Colonic mucosa (tissue), 4 donors: ENCODE measurements at regions of chr3 and their contacts with region 1.

Region 1: DNA sequence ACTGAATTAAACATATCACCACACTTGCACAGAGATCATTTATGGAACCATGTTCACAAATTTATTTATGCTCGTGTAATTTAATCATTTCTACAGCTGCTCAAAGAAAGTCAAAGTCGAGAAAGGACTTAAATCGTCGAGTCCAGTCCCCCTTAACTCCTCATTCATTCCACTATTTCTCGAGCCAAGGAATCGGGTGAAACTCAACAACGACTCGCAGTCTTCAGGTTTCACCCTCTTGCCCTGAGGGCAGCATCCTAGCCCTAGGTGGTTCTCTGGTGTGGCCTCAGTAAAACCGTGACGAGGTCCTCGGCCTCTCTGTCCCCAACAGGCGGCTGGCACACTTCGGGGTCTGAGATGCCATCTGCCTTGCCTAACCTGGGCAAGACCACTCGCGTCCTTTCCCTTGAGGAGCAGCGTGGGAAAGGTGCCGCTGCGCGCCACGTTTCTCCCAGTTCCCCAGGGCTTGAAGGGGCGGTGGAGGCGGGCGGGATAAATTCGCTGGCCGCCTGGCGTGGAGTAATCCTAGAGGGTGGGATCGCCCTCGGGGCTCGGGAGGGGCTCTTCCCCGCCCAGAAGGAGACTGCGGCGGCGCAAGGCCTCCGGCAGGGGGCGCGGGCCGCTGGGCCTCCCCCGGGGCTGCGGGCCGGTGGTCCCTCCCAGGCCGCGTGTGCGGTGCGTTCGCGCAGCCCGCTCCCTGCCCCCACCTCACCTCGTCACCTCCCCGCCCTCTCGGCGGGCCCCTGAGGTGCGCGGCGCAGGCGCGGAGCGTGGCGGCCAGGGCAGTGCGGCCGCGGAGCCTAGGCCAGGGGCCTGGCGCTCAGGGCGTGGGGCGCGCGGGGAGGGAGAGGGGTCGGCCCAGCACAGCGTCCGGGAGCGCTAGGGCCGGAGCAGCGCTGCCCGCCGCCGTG is at the start of gene ZNF639:
- DNase-seq: peak; percentile 78
- H3K4me3 ChIP-seq: peak within 1 kb of the TSS; percentile 85
- H3K27ac ChIP-seq: peak within 1 kb of the TSS; percentile 90
- H3K4me1 ChIP-seq: peaks cover 15% of the 10 kb centered on the region
- H3K27me3 ChIP-seq: no peaks in the 10 kb centered on the region
- CTCF ChIP-seq: peak; percentile 76
- total RNA-seq, gene ZNF639: 18.6 to 29.4 TPM

Region 2: GRCh38 chr3:179015551-179016020 is 307.0 kb before region 1 on chr3:
- intact Hi-C with region 1: loop called (anchors 2 kb)
- DNase-seq: peak; percentile 71
- H3K4me3 ChIP-seq: no peak overlapping the region
- H3K27ac ChIP-seq: no peak overlapping the region
- H3K4me1 ChIP-seq: no peaks in the 10 kb centered on the region
- H3K27me3 ChIP-seq: no peaks in the 10 kb centered on the region
- CTCF ChIP-seq: peak; percentile 78

Region 3: GRCh38 chr3:179147873-179148615 is 174.5 kb before region 1 on chr3 and contains the start of gene PIK3CA:
- intact Hi-C with region 1: loop called (anchors 5 kb)
- DNase-seq: peak; percentile 96
- H3K4me3 ChIP-seq: peak within 1 kb of the TSS; percentile 75
- H3K27ac ChIP-seq: peak within 1 kb of the TSS; percentile 95
- H3K4me1 ChIP-seq: no peaks in the 10 kb centered on the region
- H3K27me3 ChIP-seq: no peaks in the 10 kb centered on the region
- CTCF ChIP-seq: no peak
- total RNA-seq, gene PIK3CA: 11.3 to 18.0 TPM

Region 4: DNA sequence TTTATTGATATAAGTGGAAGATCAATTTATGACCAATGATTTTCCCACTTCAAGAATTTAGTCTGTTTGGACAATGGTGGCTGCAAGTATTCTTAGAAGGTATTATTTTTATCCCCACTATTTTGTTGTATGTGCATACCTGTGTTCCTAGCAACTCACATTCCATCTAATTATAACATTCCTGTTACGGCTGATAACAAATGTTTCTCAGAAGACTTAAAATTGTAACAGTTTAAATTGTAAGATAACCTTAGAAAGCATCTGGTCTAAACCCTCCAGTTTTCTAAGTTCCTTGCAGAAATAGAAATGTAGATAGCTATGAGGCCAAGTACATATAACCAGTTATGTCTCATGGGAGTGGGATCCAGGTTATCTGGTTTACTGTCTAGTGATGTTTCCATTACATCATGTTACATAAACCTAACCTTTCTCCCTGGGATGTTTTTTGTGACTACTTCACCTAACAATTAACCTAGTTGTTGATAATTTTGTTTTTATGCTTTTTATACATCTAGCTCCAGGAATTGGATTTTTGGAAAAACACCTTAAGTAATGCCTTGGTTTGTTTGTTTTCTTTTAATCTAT is 13.9 kb after region 1 on chr3:
- intact Hi-C with region 1: no loop called
- DNase-seq: no peak
- H3K4me3 ChIP-seq: no peak overlapping the region
- H3K27ac ChIP-seq: no peak overlapping the region
- H3K4me1 ChIP-seq: no peaks in the 10 kb centered on the region
- H3K27me3 ChIP-seq: no peaks in the 10 kb centered on the region
- CTCF ChIP-seq: no peak

Region 5: GRCh38 chr3:179562591-179563270 is 240.2 kb after region 1 on chr3 and contains the start of gene ACTL6A:
- intact Hi-C with region 1: loop called (anchors 10 kb)
- DNase-seq: peak; percentile 100
- H3K4me3 ChIP-seq: peak within 1 kb of the TSS; percentile 91
- H3K27ac ChIP-seq: peak within 1 kb of the TSS; percentile 85
- H3K4me1 ChIP-seq: peaks cover 7% of the 10 kb centered on the region
- H3K27me3 ChIP-seq: no peaks in the 10 kb centered on the region
- CTCF ChIP-seq: no peak
- total RNA-seq, gene ACTL6A: 37.2 to 49.7 TPM